A549 (cell line): ENCODE measurements at regions of chr1 and their contacts with region 1.

Region 1: GRCh38 chr1:203702130-203702577 is 62.8 kb upstream of the LAX1 start:
- DNase-seq: peak; percentile 57 to 63
- ATAC-seq: peak; percentile 83 to 93
- H3K4me3 ChIP-seq: no peak overlapping the region
- H3K27ac ChIP-seq: no peak overlapping the region
- H3K4me1 ChIP-seq: no peaks in the 10 kb centered on the region
- CTCF ChIP-seq: peak; percentile 98
- EP300 ChIP-seq: no peak
- POLR2A ChIP-seq: no peak
- RAD21 ChIP-seq: peak; percentile 98 to 99

Region 2: GRCh38 chr1:203273206-203273868 is 428.8 kb before region 1 on chr1:
- CTCF ChIA-PET with region 1: interaction called, 40 read pairs
- POLR2A ChIA-PET with region 1: no interaction called
- DNase-seq: peak; percentile 73 to 82
- ATAC-seq: peak; percentile 73 to 88
- H3K4me3 ChIP-seq: no peak overlapping the region
- H3K27ac ChIP-seq: peak overlapping the region; percentile 29 to 67; a peak in 4 of 6 replicates
- H3K4me1 ChIP-seq: peaks cover 9% of the 10 kb centered on the region
- CTCF ChIP-seq: peak; percentile 97
- EP300 ChIP-seq: no peak
- POLR2A ChIP-seq: no peak
- RAD21 ChIP-seq: peak; percentile 93 to 95

Region 3: GRCh38 chr1:203492082-203492747 is 209.9 kb before region 1 on chr1:
- CTCF ChIA-PET with region 1: interaction called, 44 read pairs
- POLR2A ChIA-PET with region 1: no interaction called
- DNase-seq: no peak
- ATAC-seq: no peak
- H3K4me3 ChIP-seq: no peak overlapping the region
- H3K27ac ChIP-seq: no peak overlapping the region
- H3K4me1 ChIP-seq: peaks cover 5% of the 10 kb centered on the region; the same call in 1 of the 3 replicates
- CTCF ChIP-seq: no peak
- EP300 ChIP-seq: no peak
- POLR2A ChIP-seq: no peak
- RAD21 ChIP-seq: no peak

Region 4: GRCh38 chr1:203512830-203513611 is 189.1 kb before region 1 on chr1:
- CTCF ChIA-PET with region 1: interaction called, 343 read pairs
- POLR2A ChIA-PET with region 1: no interaction called
- DNase-seq: peak; percentile 85 to 93
- ATAC-seq: peak; percentile 92 to 93
- H3K4me3 ChIP-seq: no peak overlapping the region
- H3K27ac ChIP-seq: peak overlapping the region; percentile 86 to 91
- H3K4me1 ChIP-seq: peaks cover 42% of the 10 kb centered on the region
- CTCF ChIP-seq: no peak
- EP300 ChIP-seq: no peak
- POLR2A ChIP-seq: no peak
- RAD21 ChIP-seq: peak in 1 of 2 experiments; percentile 17; a peak in 1 of 5 replicates

Region 5: GRCh38 chr1:203584035-203584434 is 118.1 kb before region 1 on chr1:
- CTCF ChIA-PET with region 1: interaction called, 13 read pairs
- POLR2A ChIA-PET with region 1: no interaction called
- DNase-seq: no peak
- ATAC-seq: no peak
- H3K4me3 ChIP-seq: no peak overlapping the region
- H3K27ac ChIP-seq: no peak overlapping the region
- H3K4me1 ChIP-seq: no peaks in the 10 kb centered on the region
- CTCF ChIP-seq: no peak
- EP300 ChIP-seq: no peak
- POLR2A ChIP-seq: no peak
- RAD21 ChIP-seq: no peak

Region 6: GRCh38 chr1:203612932-203613682 is 89.0 kb before region 1 on chr1:
- CTCF ChIA-PET with region 1: interaction called, 35 read pairs
- POLR2A ChIA-PET with region 1: no interaction called
- DNase-seq: no peak
- ATAC-seq: no peak
- H3K4me3 ChIP-seq: no peak overlapping the region
- H3K27ac ChIP-seq: no peak overlapping the region
- H3K4me1 ChIP-seq: no peaks in the 10 kb centered on the region
- CTCF ChIP-seq: no peak
- EP300 ChIP-seq: no peak
- POLR2A ChIP-seq: no peak
- RAD21 ChIP-seq: no peak

Region 7: DNA sequence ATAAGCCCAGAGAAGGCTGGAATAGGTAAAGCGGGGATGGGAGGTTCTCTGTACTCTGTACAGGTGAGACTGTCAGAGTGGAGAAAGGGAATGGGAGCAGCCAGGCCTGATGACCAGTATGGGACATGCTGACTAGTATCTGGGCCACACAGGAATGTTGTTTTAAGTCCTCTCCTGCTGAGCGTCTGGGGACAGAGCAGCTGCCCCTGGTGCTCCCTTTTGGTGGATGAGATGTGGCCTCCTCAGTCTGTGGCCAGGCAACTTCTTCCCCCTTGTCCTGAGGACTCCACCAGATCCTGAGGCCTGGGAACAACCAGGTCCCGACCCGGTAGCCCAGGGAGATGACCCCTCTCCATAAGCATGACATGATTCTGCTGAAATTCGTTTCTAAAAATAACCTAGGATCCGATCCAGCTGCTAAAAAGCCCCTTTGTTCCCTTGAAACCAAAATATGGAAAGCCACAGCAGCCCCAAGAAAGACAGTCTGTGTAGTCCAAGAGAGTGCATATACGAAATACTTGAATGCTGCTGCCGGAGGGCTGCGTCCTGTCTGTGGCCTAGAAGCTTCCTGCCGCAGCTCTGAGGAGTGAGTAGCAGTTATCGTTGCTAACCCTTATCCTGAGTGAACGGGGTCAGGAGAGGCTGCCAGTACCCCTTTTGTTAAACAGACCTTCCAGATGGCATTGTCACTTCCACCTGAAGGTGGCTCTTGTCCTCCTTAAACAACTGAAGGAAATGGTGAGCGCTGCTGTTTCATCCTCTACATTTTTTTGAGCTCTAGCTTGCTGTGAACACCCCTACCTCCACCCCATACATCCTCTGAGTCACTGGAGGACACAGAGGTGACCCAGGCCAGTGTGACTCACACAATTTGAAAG is 28.4 kb before region 1 on chr1:
- CTCF ChIA-PET with region 1: interaction called, 36 read pairs
- POLR2A ChIA-PET with region 1: no interaction called
- DNase-seq: peak; percentile 85 to 87
- ATAC-seq: peak; percentile 92 to 93
- H3K4me3 ChIP-seq: no peak overlapping the region
- H3K27ac ChIP-seq: peak overlapping the region; percentile 49 to 80
- H3K4me1 ChIP-seq: peaks cover 36% of the 10 kb centered on the region
- CTCF ChIP-seq: peak; percentile 38; the same call in 2 of the 3 replicates
- EP300 ChIP-seq: no peak
- POLR2A ChIP-seq: no peak
- RAD21 ChIP-seq: peak; percentile 52 to 55

Region 8: GRCh38 chr1:205344066-205344928 is 1642.1 kb after region 1 on chr1:
- CTCF ChIA-PET with region 1: no interaction called
- POLR2A ChIA-PET with region 1: no interaction called
- DNase-seq: no peak
- ATAC-seq: peak; percentile 41 to 65
- H3K4me3 ChIP-seq: peak overlapping the region; percentile 66
- H3K27ac ChIP-seq: peak overlapping the region; percentile 64 to 86; a peak in 5 of 6 replicates
- H3K4me1 ChIP-seq: peaks cover 14% of the 10 kb centered on the region; the same call in 2 of the 3 replicates
- CTCF ChIP-seq: no peak
- EP300 ChIP-seq: no peak
- POLR2A ChIP-seq: no peak
- RAD21 ChIP-seq: no peak